RWPE1 (cell line): ENCODE measurements at regions of chr18 and their contacts with region 1.

Region 1: GRCh38 chr18:623761-624620 is 27.2 kb downstream of the CLUL1 start:
- DNase-seq: peak; percentile 51
- H3K27ac ChIP-seq: no peak overlapping the region
- CTCF ChIP-seq: peak; percentile 67; the same call in 1 of the 2 replicates

Region 2: DNA sequence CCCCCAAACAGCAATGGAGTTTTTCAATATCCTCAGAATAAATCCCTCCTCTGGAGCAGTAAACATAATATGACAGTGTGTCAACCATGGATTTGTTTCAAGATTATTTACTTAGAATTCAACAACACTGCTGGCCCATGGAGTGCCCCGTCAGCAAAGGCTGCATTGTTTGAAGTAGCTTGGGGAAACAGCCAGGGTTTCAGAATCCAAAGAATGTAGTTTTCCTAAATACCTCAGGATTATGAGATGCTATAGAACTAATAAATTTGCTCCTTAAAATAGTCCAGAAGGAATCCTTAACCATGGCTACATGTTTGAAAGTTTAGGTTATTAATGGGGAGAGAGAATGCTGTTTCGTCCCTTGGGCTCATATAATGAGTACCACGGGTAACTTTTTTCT is 56.9 kb before region 1 on chr18:
- CTCF ChIA-PET with region 1: no interaction called
- POLR2A ChIA-PET with region 1: no interaction called
- DNase-seq: no peak
- H3K27ac ChIP-seq: no peak overlapping the region
- CTCF ChIP-seq: no peak

Region 3: DNA sequence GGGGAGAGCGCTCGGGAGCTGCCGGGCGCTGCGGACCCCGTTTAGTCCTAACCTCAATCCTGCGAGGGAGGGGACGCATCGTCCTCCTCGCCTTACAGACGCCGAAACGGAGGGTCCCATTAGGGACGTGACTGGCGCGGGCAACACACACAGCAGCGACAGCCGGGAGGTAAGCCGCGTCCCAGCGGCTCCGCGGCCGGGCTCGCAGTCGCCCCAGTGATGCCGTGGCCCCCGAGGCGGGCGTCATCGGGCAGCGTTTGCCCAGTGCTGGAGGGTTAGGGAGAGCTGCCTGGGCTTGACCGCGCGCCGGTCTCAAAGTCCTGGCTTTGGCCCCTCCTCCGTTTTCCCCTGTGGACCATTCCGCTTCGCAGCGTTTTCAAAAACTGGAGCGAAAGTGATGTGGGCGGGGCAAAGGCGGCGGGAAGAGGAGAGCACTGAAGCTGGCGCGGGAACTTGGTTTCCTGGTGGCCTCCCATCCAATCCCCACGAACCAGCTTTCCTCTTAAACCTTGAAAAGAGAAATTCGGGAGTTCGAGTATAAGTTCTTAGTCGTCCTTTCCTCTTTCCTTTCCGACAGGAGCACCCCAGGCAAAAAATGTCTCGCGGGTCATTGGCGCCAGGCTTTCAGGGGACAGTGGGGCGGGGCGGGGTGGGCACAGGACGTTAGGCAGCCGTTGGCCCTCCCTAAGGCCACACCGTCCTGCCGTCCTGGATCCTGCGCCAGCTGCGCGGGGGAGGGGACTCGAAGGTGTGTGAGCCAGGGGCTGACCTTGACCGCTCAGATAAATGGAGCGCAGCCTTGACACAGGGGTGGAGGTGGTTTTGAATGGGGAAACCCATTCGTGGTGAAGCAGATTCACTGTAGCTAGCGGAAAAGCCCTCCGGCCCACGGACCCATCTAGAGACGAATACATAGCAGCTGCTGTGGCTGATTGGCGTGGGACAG is 34.3 kb after region 1 on chr18:
- CTCF ChIA-PET with region 1: interaction called, 13 read pairs
- POLR2A ChIA-PET with region 1: no interaction called
- DNase-seq: peak; percentile 96
- H3K27ac ChIP-seq: peak overlapping the region; percentile 99
- CTCF ChIP-seq: no peak

Region 4: GRCh38 chr18:686339-687111 is 62.5 kb after region 1 on chr18:
- CTCF ChIA-PET with region 1: no interaction called
- POLR2A ChIA-PET with region 1: no interaction called
- DNase-seq: no peak
- H3K27ac ChIP-seq: 0 out of 2 replicates have a peak overlapping the region, but pooled peaks have one; percentile 5
- CTCF ChIP-seq: no peak

Region 5: DNA sequence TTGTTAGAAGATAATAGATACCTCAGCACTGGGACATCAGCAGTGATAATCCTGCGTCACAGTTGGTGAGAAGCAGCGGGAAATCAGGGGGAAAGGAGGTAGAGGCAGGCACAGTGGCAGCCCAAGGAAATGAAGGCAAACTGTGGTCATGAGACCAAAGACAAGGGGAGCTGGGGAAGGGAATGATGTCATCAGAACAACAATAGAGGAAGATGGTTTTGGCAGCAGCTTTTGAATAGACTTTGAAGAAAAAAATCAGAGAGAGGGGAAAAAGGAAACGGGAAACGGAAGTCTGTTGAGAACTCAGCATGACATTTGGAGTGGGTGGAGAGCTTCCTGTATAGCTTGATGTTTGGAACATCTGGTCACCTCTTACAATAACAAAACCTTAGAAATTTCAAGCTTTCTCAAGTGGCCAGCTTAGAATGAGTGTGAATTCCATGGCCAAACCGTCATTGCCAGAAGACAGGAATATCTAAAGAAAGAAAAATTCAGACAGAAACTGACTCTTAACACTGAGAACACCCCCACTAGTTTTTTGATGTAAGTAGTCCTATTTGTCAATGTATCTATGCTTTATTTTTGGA is 206.4 kb after region 1 on chr18:
- CTCF ChIA-PET with region 1: interaction called, 22 read pairs
- POLR2A ChIA-PET with region 1: no interaction called
- DNase-seq: no peak
- H3K27ac ChIP-seq: no peak overlapping the region
- CTCF ChIP-seq: no peak

Region 6: GRCh38 chr18:839224-840022 is 215.4 kb after region 1 on chr18:
- CTCF ChIA-PET with region 1: interaction called, 20 read pairs
- POLR2A ChIA-PET with region 1: no interaction called
- DNase-seq: peak; percentile 86
- H3K27ac ChIP-seq: no peak overlapping the region
- CTCF ChIP-seq: peak; percentile 97

Region 7: DNA sequence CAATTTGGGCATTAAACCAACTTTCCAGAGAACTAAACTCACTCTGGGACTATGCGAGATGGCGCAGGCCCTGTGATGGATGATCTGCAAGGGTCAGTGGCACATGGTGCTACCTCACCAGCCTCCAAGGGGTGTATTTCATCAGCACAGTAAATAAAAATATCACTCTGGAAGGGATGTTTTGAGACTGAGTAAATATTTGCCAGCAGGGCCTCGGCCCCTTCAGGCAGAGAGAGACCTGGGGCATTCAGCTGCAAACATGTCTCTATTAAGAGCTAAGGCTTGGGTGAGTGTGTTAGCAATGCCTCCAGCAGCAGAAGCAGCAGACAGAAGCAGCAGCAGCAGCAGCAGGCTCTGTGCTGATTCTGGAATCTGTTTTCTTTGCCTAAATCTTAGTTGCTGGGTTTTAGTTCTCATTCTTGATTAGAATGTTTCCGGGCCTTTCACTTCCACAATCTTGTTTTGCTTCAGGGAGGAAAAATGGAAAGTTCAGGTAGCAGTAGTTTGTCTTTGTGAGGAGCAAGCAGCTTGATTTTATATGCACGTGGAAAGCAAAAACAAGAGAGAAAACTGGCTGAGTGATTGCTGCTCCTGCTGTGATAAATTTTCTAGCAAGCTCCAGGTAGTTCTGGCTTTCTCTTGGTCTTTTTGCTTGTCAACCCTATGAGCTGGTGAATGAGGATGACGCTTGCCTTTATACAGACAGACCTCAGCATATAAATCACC is 299.3 kb after region 1 on chr18:
- CTCF ChIA-PET with region 1: no interaction called
- POLR2A ChIA-PET with region 1: no interaction called
- DNase-seq: no peak
- H3K27ac ChIP-seq: no peak overlapping the region
- CTCF ChIP-seq: no peak